GM12878 (cell line): ENCODE measurements at regions of chr20 and their contacts with region 1.

Region 1: GRCh38 chr20:35994994-35995453 is 26.6 kb downstream of the CNBD2 start:
- DNase-seq: peak; percentile 16
- ATAC-seq: peak; percentile 97
- H3K4me3 ChIP-seq: no peak overlapping the region
- H3K27ac ChIP-seq: no peak overlapping the region
- H3K4me1 ChIP-seq: no peaks in the 10 kb centered on the region
- H3K27me3 ChIP-seq: no peaks in the 10 kb centered on the region
- CTCF ChIP-seq: peak; percentile 91 to 95 (median 94)
- EP300 ChIP-seq: no peak
- POLR2A ChIP-seq: no peak
- RAD21 ChIP-seq: peak; percentile 89

Region 2: DNA sequence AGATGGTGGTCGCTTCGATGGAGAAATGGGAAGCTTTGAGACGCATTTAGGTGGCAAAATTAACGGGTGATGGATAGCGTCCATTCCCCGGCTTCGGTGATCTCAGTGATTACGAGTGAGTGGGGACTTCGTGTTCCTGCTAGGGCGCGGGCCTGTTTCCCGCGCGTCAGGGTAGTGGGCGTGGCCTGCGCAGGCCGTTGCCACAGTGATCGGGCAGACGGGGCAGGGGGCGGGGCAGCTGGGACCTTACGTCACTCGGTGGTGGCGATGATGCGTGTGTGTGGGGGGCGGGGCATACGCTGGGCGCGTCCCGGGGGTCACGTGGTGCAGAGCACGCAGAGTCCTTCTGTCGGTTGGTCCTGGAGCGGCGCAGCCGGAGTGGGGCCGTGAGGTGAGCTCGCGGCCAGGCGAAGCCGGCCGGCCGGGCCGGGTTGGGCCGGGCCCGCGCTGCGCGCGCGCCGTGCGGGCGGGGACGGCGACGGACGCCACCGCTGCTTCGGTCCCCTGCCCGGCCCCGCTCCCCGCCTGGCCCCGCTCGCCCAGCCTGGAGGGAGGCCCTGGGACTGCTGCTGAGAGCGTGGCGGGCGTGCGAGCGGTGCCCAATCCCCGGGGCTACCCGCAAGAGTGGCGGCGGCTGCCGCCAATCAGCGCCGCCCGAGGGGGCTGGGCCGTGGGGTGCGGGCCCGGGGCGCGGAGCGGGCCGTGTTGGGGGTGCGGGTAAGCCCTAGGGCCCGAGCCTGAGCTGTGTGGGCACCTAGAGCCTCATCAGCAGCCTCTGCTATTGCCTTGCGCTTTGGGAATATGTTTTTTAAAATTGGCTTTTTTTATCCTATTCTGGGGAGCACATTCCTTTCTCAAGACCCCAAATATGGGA is 223.1 kb before region 1 on chr20 and contains the start of gene PHF20:
- CTCF ChIA-PET with region 1: no interaction called
- POLR2A ChIA-PET with region 1: no interaction called
- RAD21 ChIA-PET with region 1: no interaction called
- SMC1A ChIA-PET with region 1: no interaction called
- in situ Hi-C with region 1: no loop called
- intact Hi-C with region 1: no loop called
- DNase-seq: peak; percentile 87
- ATAC-seq: peak; percentile 88
- H3K4me3 ChIP-seq: peak within 1 kb of the TSS; percentile 92
- H3K27ac ChIP-seq: peak within 1 kb of the TSS; percentile 79
- H3K4me1 ChIP-seq: peaks cover 33% of the 10 kb centered on the region
- H3K27me3 ChIP-seq: no peaks in the 10 kb centered on the region
- CTCF ChIP-seq: no peak
- EP300 ChIP-seq: peak; percentile 16 to 24; a peak in 1 of 4 replicates
- POLR2A ChIP-seq: peak; percentile 90
- RAD21 ChIP-seq: no peak
- polyA plus RNA-seq, gene PHF20: 90.7 to 91.2 TPM

Region 3: GRCh38 chr20:35978041-35978513 is 16.9 kb before region 1 on chr20:
- CTCF ChIA-PET with region 1: interaction called, 73 read pairs
- POLR2A ChIA-PET with region 1: no interaction called
- RAD21 ChIA-PET with region 1: interaction called, 12 read pairs
- SMC1A ChIA-PET with region 1: interaction called, 14 read pairs
- in situ Hi-C with region 1: no loop called
- intact Hi-C with region 1: no loop called
- DNase-seq: no peak
- ATAC-seq: 0 out of 3 replicates have a peak, but pooled peaks have one; percentile 20
- H3K4me3 ChIP-seq: no peak overlapping the region
- H3K27ac ChIP-seq: no peak overlapping the region
- H3K4me1 ChIP-seq: no peaks in the 10 kb centered on the region
- H3K27me3 ChIP-seq: no peaks in the 10 kb centered on the region
- CTCF ChIP-seq: no peak
- EP300 ChIP-seq: no peak
- POLR2A ChIP-seq: no peak
- RAD21 ChIP-seq: no peak

Region 4: GRCh38 chr20:36085686-36086267 is 90.8 kb after region 1 on chr20:
- CTCF ChIA-PET with region 1: interaction called, 17 read pairs
- POLR2A ChIA-PET with region 1: interaction called, 3 read pairs
- RAD21 ChIA-PET with region 1: no interaction called
- SMC1A ChIA-PET with region 1: no interaction called
- in situ Hi-C with region 1: no loop called
- intact Hi-C with region 1: no loop called
- DNase-seq: no peak
- ATAC-seq: peak; percentile 75
- H3K4me3 ChIP-seq: no peak overlapping the region
- H3K27ac ChIP-seq: no peak overlapping the region
- H3K4me1 ChIP-seq: no peaks in the 10 kb centered on the region; the same call in 1 of the 2 replicates
- H3K27me3 ChIP-seq: no peaks in the 10 kb centered on the region
- CTCF ChIP-seq: no peak
- EP300 ChIP-seq: no peak
- POLR2A ChIP-seq: no peak
- RAD21 ChIP-seq: no peak

Region 5: GRCh38 chr20:36128463-36129159 is 133.6 kb after region 1 on chr20:
- CTCF ChIA-PET with region 1: interaction called, 717 read pairs
- POLR2A ChIA-PET with region 1: no interaction called
- RAD21 ChIA-PET with region 1: interaction called, 325 read pairs
- SMC1A ChIA-PET with region 1: interaction called, 344 read pairs
- in situ Hi-C with region 1: no loop called
- intact Hi-C with region 1: no loop called
- DNase-seq: no peak
- ATAC-seq: no peak
- H3K4me3 ChIP-seq: no peak overlapping the region
- H3K27ac ChIP-seq: no peak overlapping the region
- H3K4me1 ChIP-seq: no peaks in the 10 kb centered on the region
- H3K27me3 ChIP-seq: 0 out of 4 replicates have a peak, but pooled peaks cover 0 to 4% of the 10 kb centered on the region in 2 experiments
- CTCF ChIP-seq: no peak
- EP300 ChIP-seq: no peak
- POLR2A ChIP-seq: no peak
- RAD21 ChIP-seq: no peak

Region 6: GRCh38 chr20:36145877-36146707 is 151.1 kb after region 1 on chr20:
- CTCF ChIA-PET with region 1: interaction called, 717 read pairs
- POLR2A ChIA-PET with region 1: interaction called, 9 read pairs
- RAD21 ChIA-PET with region 1: interaction called, 325 read pairs
- SMC1A ChIA-PET with region 1: interaction called, 344 read pairs
- in situ Hi-C with region 1: no loop called
- intact Hi-C with region 1: no loop called
- DNase-seq: no peak
- ATAC-seq: peak; percentile 24
- H3K4me3 ChIP-seq: no peak overlapping the region
- H3K27ac ChIP-seq: no peak overlapping the region
- H3K4me1 ChIP-seq: peaks cover 19% of the 10 kb centered on the region
- H3K27me3 ChIP-seq: no peaks in the 10 kb centered on the region
- CTCF ChIP-seq: no peak
- EP300 ChIP-seq: no peak
- POLR2A ChIP-seq: no peak
- RAD21 ChIP-seq: no peak

Region 7: GRCh38 chr20:36199345-36200257 is 204.6 kb after region 1 on chr20:
- CTCF ChIA-PET with region 1: interaction called, 115 read pairs
- POLR2A ChIA-PET with region 1: no interaction called
- RAD21 ChIA-PET with region 1: interaction called, 29 read pairs
- SMC1A ChIA-PET with region 1: interaction called, 12 read pairs
- in situ Hi-C with region 1: no loop called
- intact Hi-C with region 1: loop called (anchors 2 kb)
- DNase-seq: no peak
- ATAC-seq: peak; percentile 91
- H3K4me3 ChIP-seq: no peak overlapping the region
- H3K27ac ChIP-seq: no peak overlapping the region
- H3K4me1 ChIP-seq: no peaks in the 10 kb centered on the region
- H3K27me3 ChIP-seq: peaks cover 0 to 7% of the 10 kb centered on the region in 2 experiments; a peak in 3 of 4 replicates
- CTCF ChIP-seq: peak; percentile 87 to 94 (median 92)
- EP300 ChIP-seq: no peak
- POLR2A ChIP-seq: no peak
- RAD21 ChIP-seq: peak; percentile 63

Region 8: DNA sequence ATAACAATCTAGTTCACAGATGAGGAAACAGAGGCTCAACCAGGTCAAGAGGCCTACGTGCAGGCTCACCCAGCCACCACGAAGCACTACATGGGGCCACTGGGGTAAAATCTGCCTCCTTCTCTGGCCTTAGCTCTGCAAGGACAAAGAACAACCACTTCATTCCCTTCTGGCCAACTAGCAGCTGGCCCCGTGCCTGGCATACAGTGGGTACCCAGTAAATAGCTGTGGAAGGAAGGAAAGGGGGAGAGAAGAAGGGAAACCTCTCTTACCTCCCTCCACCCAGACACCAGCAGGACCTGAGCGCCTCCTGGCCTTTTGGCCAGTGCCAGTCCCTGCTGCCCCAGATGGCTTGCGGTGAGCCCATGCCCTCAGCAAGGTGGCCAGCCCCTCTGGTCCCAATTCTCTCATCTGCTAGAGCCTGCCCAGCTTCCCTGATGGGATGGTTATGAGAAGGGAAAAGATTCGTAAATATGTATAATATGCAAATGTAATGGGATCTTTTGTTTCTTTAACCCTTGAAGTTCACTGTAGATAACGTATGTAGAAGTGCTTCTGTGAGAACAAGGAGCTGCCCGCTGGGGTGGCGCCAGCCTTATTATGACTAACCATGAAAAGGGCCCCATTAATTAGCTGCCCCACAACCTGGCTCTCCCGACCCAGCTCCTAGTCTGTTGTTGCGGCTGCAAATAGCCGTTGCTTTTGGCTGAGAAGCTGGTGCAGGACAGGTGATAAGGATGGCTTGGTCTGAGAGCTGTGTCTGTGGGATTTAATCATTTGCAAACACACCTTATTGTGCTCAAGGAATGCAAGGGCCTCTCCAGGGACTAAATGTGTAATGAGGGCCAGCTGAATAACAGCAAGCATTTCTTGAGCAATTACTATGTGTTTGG is 373.1 kb after region 1 on chr20:
- CTCF ChIA-PET with region 1: no interaction called
- POLR2A ChIA-PET with region 1: no interaction called
- RAD21 ChIA-PET with region 1: no interaction called
- SMC1A ChIA-PET with region 1: no interaction called
- in situ Hi-C with region 1: no loop called
- intact Hi-C with region 1: no loop called
- DNase-seq: no peak
- ATAC-seq: no peak
- H3K4me3 ChIP-seq: no peak overlapping the region
- H3K27ac ChIP-seq: no peak overlapping the region
- H3K4me1 ChIP-seq: no peaks in the 10 kb centered on the region
- H3K27me3 ChIP-seq: peaks cover under 1 to 6% of the 10 kb centered on the region in 2 experiments; a peak in 3 of 4 replicates
- CTCF ChIP-seq: no peak
- EP300 ChIP-seq: no peak
- POLR2A ChIP-seq: no peak
- RAD21 ChIP-seq: no peak

Region 9: DNA sequence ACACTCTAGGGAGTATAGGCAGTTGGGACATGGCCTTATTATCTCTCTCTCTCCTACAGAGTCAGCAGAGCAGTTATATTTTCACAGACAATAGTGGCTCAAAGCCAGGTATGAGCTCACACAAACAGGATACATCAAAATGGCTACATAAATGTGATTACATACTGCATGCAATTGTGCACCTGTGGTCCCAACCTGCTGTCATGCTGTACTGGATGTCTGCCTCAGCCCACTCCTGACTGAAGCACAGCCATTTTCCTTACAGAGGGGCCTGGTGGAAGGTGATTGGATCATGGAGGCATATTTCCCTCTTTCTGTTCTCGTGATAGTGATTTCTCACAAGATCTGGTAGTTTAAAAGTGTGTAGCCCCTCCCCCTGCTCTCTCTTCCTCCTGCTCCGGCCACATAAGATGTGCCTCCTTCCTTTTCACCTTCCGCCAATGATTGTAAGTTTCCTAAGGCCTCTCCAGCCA is 993.5 kb after region 1 on chr20:
- CTCF ChIA-PET with region 1: no interaction called
- POLR2A ChIA-PET with region 1: no interaction called
- RAD21 ChIA-PET with region 1: no interaction called
- SMC1A ChIA-PET with region 1: no interaction called
- in situ Hi-C with region 1: no loop called
- intact Hi-C with region 1: no loop called
- DNase-seq: no peak
- ATAC-seq: peak; percentile 58
- H3K4me3 ChIP-seq: no peak overlapping the region
- H3K27ac ChIP-seq: no peak overlapping the region
- H3K4me1 ChIP-seq: no peaks in the 10 kb centered on the region
- H3K27me3 ChIP-seq: no peaks in the 10 kb centered on the region
- CTCF ChIP-seq: no peak
- EP300 ChIP-seq: no peak
- POLR2A ChIP-seq: no peak
- RAD21 ChIP-seq: no peak